Esophagus muscularis mucosa (tissue), 4 donors: ENCODE measurements at regions of chr5 and their contacts with region 1.

Region 1: GRCh38 chr5:128201065-128201926 is 117.7 kb downstream of the SLC12A2 start:
- DNase-seq: no peak
- H3K4me3 ChIP-seq: peak overlapping the region; percentile 19 to 41 (median 32)
- H3K27ac ChIP-seq: no peak overlapping the region
- H3K4me1 ChIP-seq: peaks cover 7 to 26% (median 25%) of the 10 kb centered on the region in 4 donors
- H3K27me3 ChIP-seq: no peaks in the 10 kb centered on the region
- CTCF ChIP-seq: peak; percentile 89 to 92 (median 91)
- EP300 ChIP-seq: no peak
- POLR2A ChIP-seq: no peak

Region 2: GRCh38 chr5:127564002-127564769 is 637.1 kb before region 1 on chr5:
- intact Hi-C with region 1: loop called (anchors 5 kb)
- DNase-seq: no peak
- H3K4me3 ChIP-seq: no peak overlapping the region
- H3K27ac ChIP-seq: peak overlapping the region; percentile 55 to 61 (median 57)
- H3K4me1 ChIP-seq: peaks cover 8 to 52% (median 41%) of the 10 kb centered on the region in 4 donors
- H3K27me3 ChIP-seq: no peaks in the 10 kb centered on the region
- CTCF ChIP-seq: peak; percentile 72 to 78 (median 73)
- EP300 ChIP-seq: no peak
- POLR2A ChIP-seq: no peak

Region 3: DNA sequence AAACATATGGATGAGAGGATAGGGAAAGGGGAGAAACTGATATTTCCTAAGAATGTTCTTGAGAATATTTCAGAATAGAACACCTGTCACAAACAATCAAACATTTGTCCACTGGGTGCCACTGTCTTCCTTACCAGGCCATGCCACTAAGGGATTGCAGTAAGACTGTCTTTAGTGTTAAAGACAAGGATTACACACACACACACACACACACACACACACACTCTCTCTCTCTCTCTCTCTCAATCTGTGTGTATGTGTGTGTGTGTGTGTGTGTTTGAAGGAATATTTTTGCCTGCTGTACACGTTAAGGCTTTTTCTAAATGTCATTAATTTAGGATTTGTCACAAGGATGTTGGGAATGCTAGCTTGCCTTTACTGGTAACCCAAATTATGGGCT is 443.7 kb before region 1 on chr5:
- intact Hi-C with region 1: loop called (anchors 5 kb)
- DNase-seq: no peak
- H3K4me3 ChIP-seq: no peak overlapping the region
- H3K27ac ChIP-seq: peak overlapping the region; percentile 5 to 52 (median 26)
- H3K4me1 ChIP-seq: peaks cover 4 to 53% (median 49%) of the 10 kb centered on the region in 4 donors
- H3K27me3 ChIP-seq: no peaks in the 10 kb centered on the region
- CTCF ChIP-seq: peak; percentile 43 to 55 (median 46)
- EP300 ChIP-seq: no peak
- POLR2A ChIP-seq: no peak

Region 4: GRCh38 chr5:127875235-127876021 is 325.9 kb before region 1 on chr5:
- intact Hi-C with region 1: loop called (anchors 10 kb)
- DNase-seq: no peak
- H3K4me3 ChIP-seq: peak overlapping the region in 1 of 4 donors; percentile 4
- H3K27ac ChIP-seq: peak overlapping the region; percentile 52 to 66 (median 58)
- H3K4me1 ChIP-seq: peaks cover 19 to 44% (median 41%) of the 10 kb centered on the region in 4 donors
- H3K27me3 ChIP-seq: no peaks in the 10 kb centered on the region
- CTCF ChIP-seq: peak in 2 of 3 experiments; percentile 16 to 23
- EP300 ChIP-seq: no peak
- POLR2A ChIP-seq: no peak